ENCODE measurements at regions of chr7 and their contacts with region 1.

Region 1: DNA sequence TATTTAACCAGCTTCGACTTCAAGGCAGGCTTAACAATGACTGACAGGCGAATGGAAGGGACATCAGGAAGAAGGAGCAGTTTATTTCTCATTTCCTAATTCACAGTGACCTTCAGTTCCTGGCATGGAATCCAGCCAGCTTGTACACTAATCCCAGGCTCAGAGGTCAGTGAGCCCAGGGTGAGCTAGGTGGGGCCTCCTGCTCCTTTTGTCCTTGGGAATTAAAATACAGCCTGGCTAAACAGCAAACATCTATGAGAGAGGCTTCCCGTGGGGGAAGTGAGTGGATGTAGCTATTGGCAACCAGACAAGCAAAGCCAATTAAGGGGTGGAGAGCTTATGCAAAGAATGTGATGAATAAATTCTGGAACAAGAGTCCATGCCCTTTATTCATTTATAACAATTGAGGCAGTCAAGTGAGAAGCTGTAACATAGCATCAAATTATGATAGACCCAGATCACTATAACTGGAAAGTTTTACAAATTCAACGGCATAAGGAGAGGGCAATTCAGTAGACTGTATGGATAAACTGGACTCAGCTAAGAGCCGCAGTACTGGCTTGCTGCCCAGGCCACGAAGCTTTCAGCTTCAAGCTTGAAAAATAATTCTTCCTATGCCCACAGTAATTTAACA is 57.1 kb downstream of the STK17A start:
- DNase-seq: peak in 2 of 10 donors; percentile 40 to 42
- ATAC-seq: peak; percentile 12 to 37
- H3K4me3 Mint-ChIP-seq: peak overlapping the region in 8 of 10 donors; percentile 63 to 80 (median 74)
- H3K27ac Mint-ChIP-seq: peak overlapping the region in 9 of 10 donors; percentile 89 to 99 (median 94)
- H3K4me1 Mint-ChIP-seq: peaks cover 47 to 97% (median 92%) of the 10 kb centered on the region in 4 donors
- H3K27me3 Mint-ChIP-seq: no peaks in the 10 kb centered on the region

Region 2: DNA sequence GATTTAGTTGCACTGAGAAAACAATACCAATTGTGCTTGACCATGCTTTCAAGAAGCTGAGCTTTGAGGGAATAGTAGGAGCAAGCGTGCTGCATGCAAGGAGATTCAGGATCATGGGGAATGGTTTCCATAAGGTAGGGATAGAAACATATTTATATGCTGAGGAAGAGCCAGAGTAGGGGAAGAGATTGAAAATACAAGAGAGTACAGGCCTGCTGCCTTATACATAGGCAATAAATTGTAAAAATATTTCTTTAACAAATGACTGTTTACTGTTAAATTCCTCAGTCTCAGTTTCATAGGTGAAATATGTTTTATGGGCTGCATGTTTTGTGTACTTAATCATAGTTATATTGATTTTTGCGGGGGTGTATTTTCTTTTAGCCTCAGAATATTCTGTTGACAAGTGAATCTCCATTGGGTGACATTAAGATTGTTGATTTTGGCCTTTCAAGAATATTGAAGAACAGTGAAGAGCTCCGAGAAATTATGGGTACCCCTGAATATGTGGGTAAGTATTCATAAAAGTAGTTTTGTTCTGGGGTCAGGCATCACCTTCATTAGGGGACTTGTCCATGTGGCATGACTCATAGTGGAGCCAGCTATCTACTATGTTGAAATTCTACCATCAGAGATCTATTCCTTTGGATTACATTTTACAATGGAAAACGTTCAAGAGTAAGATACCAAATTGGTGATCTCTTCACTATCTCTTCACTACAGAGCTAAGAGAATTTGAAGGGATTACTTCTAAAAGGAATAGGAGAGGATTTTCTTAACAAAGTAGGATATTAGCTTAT is 20.6 kb before region 1 on chr7:
- POLR2A ChIA-PET with region 1: interaction called, 44 read pairs
- DNase-seq: no peak
- ATAC-seq: no peak
- H3K4me3 Mint-ChIP-seq: no peak overlapping the region
- H3K27ac Mint-ChIP-seq: no peak overlapping the region
- H3K4me1 Mint-ChIP-seq: peaks cover 26 to 56% (median 32%) of the 10 kb centered on the region in 4 donors
- H3K27me3 Mint-ChIP-seq: no peaks in the 10 kb centered on the region

Region 3: DNA sequence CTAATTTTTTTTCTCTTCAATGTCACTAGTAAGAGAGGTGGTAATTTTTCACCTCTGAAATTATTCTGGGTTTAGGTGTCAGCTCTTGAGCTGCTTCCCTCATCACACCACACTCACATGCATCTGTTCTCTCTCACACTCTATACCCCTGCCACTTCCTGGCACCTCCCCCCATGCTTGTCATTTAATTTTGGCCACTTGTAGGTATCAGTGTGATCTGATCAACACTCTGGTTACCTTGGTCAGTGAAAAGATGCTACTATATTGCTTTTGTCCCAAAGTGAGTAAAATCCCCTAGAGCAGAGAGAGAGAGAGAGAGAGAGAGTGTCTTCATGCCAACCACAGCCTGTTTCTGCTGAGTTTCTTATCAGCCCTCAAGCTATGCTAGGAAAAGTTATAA is 14.5 kb before region 1 on chr7:
- POLR2A ChIA-PET with region 1: interaction called, 306 read pairs
- DNase-seq: peak in 9 of 10 donors; percentile 35 to 78 (median 72)
- ATAC-seq: peak; percentile 48 to 83
- H3K4me3 Mint-ChIP-seq: peak overlapping the region; percentile 63 to 85 (median 72)
- H3K27ac Mint-ChIP-seq: peak overlapping the region in 8 of 10 donors; percentile 52 to 98 (median 94)
- H3K4me1 Mint-ChIP-seq: peaks cover 43 to 94% (median 86%) of the 10 kb centered on the region in 4 donors
- H3K27me3 Mint-ChIP-seq: peaks cover 0 to 2% (median 0%) of the 10 kb centered on the region in 5 donors